K562 (cell line): ENCODE measurements at regions of chr12 and their contacts with region 1.

Region 1: DNA sequence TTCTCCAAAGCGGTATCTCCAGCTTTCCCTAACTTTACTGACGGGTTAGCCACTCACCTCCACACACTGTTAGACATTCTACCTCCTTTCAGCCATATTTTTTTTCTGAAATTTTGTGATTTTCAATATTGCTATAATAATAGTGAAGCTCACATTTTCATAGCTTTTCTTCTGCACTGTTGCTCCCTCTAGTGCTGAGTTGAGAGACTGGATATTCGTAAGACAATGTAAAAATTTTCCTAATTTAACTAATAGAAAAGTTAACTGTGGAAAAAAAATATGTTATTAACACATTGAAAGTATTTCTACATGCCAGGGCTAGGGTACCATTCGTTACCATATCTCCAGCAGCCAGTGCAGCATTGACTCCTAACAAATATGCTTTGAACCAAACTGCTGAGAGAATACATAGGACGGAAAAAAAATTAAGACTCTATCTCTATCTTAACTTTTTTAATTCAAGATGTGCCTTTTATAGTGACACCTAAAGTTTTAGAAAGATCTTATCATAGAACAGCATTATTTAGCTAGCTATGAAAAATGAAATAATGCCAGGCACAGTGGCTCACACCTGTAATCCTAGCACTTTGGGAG is 48.7 kb upstream of the ABCC9 start:
- DNase-seq: peak in 1 of 4 experiments; percentile 34
- ATAC-seq: 0 out of 3 replicates have a peak, but pooled peaks have one; percentile 30
- H3K4me3 ChIP-seq: no peak overlapping the region
- H3K27ac ChIP-seq: no peak overlapping the region
- H3K4me1 ChIP-seq: peaks cover 0 to 11% of the 10 kb centered on the region in 2 experiments; a peak in 2 of 5 replicates
- H3K27me3 ChIP-seq: no peaks in the 10 kb centered on the region
- CTCF ChIP-seq: peak in 2 of 3 experiments; percentile 21 to 56; a peak in 3 of 6 replicates
- EP300 ChIP-seq: no peak
- POLR2A ChIP-seq: no peak
- RAD21 ChIP-seq: peak; percentile 16 to 54; a peak in 2 of 4 replicates

Region 2: DNA sequence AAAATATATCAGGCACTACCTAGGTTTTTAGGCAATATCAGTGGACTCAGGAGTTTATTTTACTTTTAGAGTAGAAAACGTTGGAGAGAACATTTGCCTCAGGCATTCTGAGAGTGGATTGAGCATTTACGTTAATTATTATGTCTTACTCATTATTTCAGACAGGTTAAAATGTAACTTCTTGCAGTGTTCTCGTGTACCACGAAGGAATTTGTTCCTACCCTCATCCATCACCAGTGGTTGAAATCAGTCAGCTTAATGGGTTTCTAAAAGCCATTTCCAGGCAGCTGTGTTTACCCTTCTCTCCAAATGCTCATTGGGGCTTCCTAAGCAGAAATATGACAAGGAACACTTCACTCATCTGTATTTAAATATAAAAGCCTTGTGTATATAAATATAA is 323.2 kb before region 1 on chr12:
- CTCF ChIA-PET with region 1: no interaction called
- POLR2A ChIA-PET with region 1: no interaction called
- in situ Hi-C with region 1: no loop called
- intact Hi-C with region 1: no loop called
- DNase-seq: no peak
- ATAC-seq: no peak
- H3K4me3 ChIP-seq: no peak overlapping the region
- H3K27ac ChIP-seq: no peak overlapping the region
- H3K4me1 ChIP-seq: no peaks in the 10 kb centered on the region
- H3K27me3 ChIP-seq: no peaks in the 10 kb centered on the region
- CTCF ChIP-seq: no peak
- EP300 ChIP-seq: no peak
- POLR2A ChIP-seq: no peak
- RAD21 ChIP-seq: no peak

Region 3: DNA sequence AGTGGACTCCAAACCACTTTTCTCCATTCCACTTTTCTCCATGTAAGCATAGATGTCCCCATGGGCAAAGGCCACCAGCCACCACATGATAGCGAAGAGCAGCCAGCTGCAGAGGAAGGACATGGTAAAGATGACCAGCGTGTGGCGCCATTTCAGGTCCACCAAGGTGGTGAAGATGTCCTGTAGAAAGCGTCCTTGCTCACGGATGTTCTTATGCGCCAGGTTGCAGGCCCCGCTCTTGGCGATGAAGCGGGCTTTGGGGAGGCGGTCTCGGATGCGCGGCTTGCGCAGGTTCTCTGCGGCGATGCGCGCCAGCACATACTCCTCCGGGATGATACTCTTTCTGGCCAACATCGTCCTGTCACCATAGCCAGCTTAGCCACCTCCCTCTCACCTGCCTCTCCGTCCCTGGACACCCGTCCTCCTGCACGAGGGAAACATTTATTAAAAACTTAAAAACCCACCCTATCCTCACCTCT is 216.6 kb before region 1 on chr12:
- CTCF ChIA-PET with region 1: no interaction called
- POLR2A ChIA-PET with region 1: no interaction called
- in situ Hi-C with region 1: no loop called
- intact Hi-C with region 1: loop called (anchors 5 kb)
- DNase-seq: peak; percentile 18 to 75 (median 20)
- ATAC-seq: peak; percentile 77
- H3K4me3 ChIP-seq: no peak overlapping the region
- H3K27ac ChIP-seq: no peak overlapping the region
- H3K4me1 ChIP-seq: peaks cover 0 to 8% of the 10 kb centered on the region in 2 experiments; a peak in 3 of 5 replicates
- H3K27me3 ChIP-seq: no peaks in the 10 kb centered on the region; a peak in 1 of 5 replicates
- CTCF ChIP-seq: peak; percentile 38 to 52 (median 49); a peak in 5 of 6 replicates
- EP300 ChIP-seq: no peak
- POLR2A ChIP-seq: no peak
- RAD21 ChIP-seq: peak in 1 of 2 experiments; percentile 45; a peak in 2 of 4 replicates

Region 4: DNA sequence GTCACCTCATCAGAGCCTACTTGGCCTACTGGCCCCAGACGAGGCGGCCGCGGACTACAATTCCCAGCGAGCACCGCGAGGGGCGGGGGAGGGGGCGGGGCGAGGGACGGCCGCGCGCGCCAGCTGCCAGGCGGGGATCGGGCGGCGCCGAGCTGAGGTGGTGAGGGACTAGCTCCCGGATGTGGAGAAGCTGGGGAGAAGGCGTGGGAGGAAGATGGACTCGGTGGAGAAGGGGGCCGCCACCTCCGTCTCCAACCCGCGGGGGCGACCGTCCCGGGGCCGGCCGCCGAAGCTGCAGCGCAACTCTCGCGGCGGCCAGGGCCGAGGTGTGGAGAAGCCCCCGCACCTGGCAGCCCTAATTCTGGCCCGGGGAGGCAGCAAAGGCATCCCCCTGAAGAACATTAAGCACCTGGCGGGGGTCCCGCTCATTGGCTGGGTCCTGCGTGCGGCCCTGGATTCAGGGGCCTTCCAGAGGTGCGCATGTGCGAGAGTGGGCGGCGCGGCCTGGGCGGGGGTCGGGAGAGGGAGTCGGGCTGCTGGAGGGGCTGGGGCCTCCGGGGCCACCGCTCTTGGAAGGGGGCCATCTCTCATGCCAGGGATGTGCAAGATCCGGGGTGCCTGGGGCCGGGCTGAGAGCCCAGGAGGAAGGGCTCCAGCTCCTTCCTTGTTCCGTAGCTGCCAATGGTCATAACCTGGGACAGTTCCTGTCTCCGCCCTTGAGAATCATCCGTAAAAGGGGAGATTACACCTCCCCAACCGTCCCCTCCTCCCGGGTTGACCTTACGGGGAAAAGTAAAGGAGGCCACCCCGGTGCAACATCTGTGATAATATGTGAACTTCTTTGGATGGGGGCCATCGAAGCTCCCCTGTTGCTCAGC is 56.4 kb after region 1 on chr12 and contains the start of gene CMAS:
- CTCF ChIA-PET with region 1: no interaction called
- POLR2A ChIA-PET with region 1: no interaction called
- in situ Hi-C with region 1: no loop called
- intact Hi-C with region 1: loop called (anchors 2 kb)
- DNase-seq: peak; percentile 80 to 94 (median 83)
- ATAC-seq: peak; percentile 83
- H3K4me3 ChIP-seq: peak within 1 kb of the TSS; percentile 93
- H3K27ac ChIP-seq: peak within 1 kb of the TSS; percentile 88
- H3K4me1 ChIP-seq: peaks cover 10 to 50% of the 10 kb centered on the region in 2 experiments; a peak in 4 of 5 replicates
- H3K27me3 ChIP-seq: no peaks in the 10 kb centered on the region
- CTCF ChIP-seq: no peak
- EP300 ChIP-seq: peak; percentile 87; the same call in 1 of the 2 replicates
- POLR2A ChIP-seq: peak; percentile 82
- RAD21 ChIP-seq: no peak; a peak in 1 of 4 replicates
- polyA plus RNA-seq, gene CMAS: 29.7 to 32.0 TPM

Region 5: GRCh38 chr12:22116376-22116775 is 126.5 kb after region 1 on chr12:
- CTCF ChIA-PET with region 1: no interaction called
- POLR2A ChIA-PET with region 1: no interaction called
- in situ Hi-C with region 1: no loop called
- intact Hi-C with region 1: no loop called
- DNase-seq: no peak
- ATAC-seq: no peak
- H3K4me3 ChIP-seq: no peak overlapping the region
- H3K27ac ChIP-seq: no peak overlapping the region
- H3K4me1 ChIP-seq: no peaks in the 10 kb centered on the region
- H3K27me3 ChIP-seq: peaks cover 0 to 8% of the 10 kb centered on the region in 2 experiments; a peak in 3 of 5 replicates
- CTCF ChIP-seq: no peak
- EP300 ChIP-seq: no peak
- POLR2A ChIP-seq: no peak
- RAD21 ChIP-seq: no peak